Calu3 (cell line): ENCODE measurements at regions of chr15 and their contacts with region 1.

Region 1: GRCh38 chr15:78308422-78309032 is 9.1 kb upstream of the SKIC8 start:
- DNase-seq: peak; percentile 88
- H3K4me3 Mint-ChIP-seq: no peak overlapping the region
- H3K27ac Mint-ChIP-seq: no peak overlapping the region
- H3K4me1 Mint-ChIP-seq: peaks cover 29% of the 10 kb centered on the region
- H3K27me3 Mint-ChIP-seq: peaks cover 19% of the 10 kb centered on the region
- CTCF ChIP-seq: peak; percentile 90

Region 2: DNA sequence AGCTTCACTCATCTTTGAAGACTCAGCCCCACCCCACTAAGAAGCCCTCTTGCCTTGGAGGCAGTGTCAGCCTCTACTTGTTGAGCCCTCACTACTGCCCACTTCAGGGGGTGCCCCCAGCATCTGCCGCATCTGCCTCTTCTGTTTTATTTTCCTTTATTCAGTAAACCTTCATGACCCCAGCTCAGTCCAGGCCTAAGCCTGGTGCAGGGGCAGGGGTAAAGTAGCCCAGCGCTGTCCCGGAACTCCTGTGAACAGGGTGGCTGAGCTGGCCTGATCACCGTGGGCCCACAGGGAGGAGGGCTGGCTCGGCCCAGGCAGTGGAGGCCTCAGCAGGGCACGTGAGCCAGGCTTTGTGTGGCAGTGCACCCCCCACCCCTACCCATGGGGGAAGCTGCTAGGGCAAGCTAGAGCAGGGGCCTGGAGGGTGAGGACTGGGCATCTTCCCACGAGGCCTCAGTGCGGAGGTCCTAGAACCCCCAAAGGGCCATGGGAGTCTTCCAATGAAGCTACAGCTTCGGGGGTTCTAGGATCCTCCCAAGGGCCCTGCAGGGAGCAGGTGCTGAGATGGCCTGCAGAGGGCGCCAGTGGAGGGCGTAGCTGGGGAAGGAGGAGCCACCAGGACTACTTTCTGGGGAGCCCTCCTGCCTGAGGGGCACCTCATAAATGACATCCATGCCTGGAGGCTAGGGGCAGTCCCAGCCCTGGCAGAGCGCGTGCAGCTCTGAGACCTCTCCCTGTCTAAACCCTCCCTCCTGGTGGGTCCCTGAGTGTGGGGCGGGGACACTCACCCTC is 1273.6 kb before region 1 on chr15:
- CTCF ChIA-PET with region 1: no interaction called
- intact Hi-C with region 1: no loop called
- DNase-seq: peak; percentile 61
- H3K4me3 Mint-ChIP-seq: no peak overlapping the region
- H3K27ac Mint-ChIP-seq: peak overlapping the region; percentile 63
- H3K4me1 Mint-ChIP-seq: peaks cover 15% of the 10 kb centered on the region
- H3K27me3 Mint-ChIP-seq: no peaks in the 10 kb centered on the region
- CTCF ChIP-seq: peak; percentile 84

Region 3: GRCh38 chr15:78120523-78120922 is 188.0 kb before region 1 on chr15:
- CTCF ChIA-PET with region 1: no interaction called
- intact Hi-C with region 1: no loop called
- DNase-seq: no peak
- H3K4me3 Mint-ChIP-seq: no peak overlapping the region
- H3K27ac Mint-ChIP-seq: no peak overlapping the region
- H3K4me1 Mint-ChIP-seq: no peaks in the 10 kb centered on the region
- H3K27me3 Mint-ChIP-seq: no peaks in the 10 kb centered on the region
- CTCF ChIP-seq: no peak

Region 4: GRCh38 chr15:78347586-78348535 is 39.3 kb after region 1 on chr15:
- CTCF ChIA-PET with region 1: no interaction called
- intact Hi-C with region 1: no loop called
- DNase-seq: peak; percentile 25
- H3K4me3 Mint-ChIP-seq: no peak overlapping the region
- H3K27ac Mint-ChIP-seq: no peak overlapping the region
- H3K4me1 Mint-ChIP-seq: peaks cover 11% of the 10 kb centered on the region
- H3K27me3 Mint-ChIP-seq: peaks cover 18% of the 10 kb centered on the region
- CTCF ChIP-seq: no peak

Region 5: GRCh38 chr15:78415286-78415685 is 106.8 kb after region 1 on chr15:
- CTCF ChIA-PET with region 1: interaction called, 30 read pairs
- intact Hi-C with region 1: loop called (anchors 1 kb)
- DNase-seq: peak; percentile 10
- H3K4me3 Mint-ChIP-seq: no peak overlapping the region
- H3K27ac Mint-ChIP-seq: no peak overlapping the region
- H3K4me1 Mint-ChIP-seq: peaks cover 10% of the 10 kb centered on the region
- H3K27me3 Mint-ChIP-seq: no peaks in the 10 kb centered on the region
- CTCF ChIP-seq: peak; percentile 33

Region 6: GRCh38 chr15:78422571-78423340 is 114.2 kb after region 1 on chr15:
- CTCF ChIA-PET with region 1: interaction called, 12 read pairs
- intact Hi-C with region 1: no loop called
- DNase-seq: peak; percentile 70
- H3K4me3 Mint-ChIP-seq: no peak overlapping the region
- H3K27ac Mint-ChIP-seq: no peak overlapping the region
- H3K4me1 Mint-ChIP-seq: peaks cover 10% of the 10 kb centered on the region
- H3K27me3 Mint-ChIP-seq: peaks cover 45% of the 10 kb centered on the region
- CTCF ChIP-seq: peak; percentile 93

Region 7: GRCh38 chr15:78570710-78571109 is 262.2 kb after region 1 on chr15:
- CTCF ChIA-PET with region 1: no interaction called
- intact Hi-C with region 1: no loop called
- DNase-seq: no peak
- H3K4me3 Mint-ChIP-seq: no peak overlapping the region
- H3K27ac Mint-ChIP-seq: no peak overlapping the region
- H3K4me1 Mint-ChIP-seq: no peaks in the 10 kb centered on the region
- H3K27me3 Mint-ChIP-seq: no peaks in the 10 kb centered on the region
- CTCF ChIP-seq: no peak